Activated CD4-positive, alpha-beta T cell treated with anti-CD3 and anti-CD28 coated beads, Interleukin-2, amount 10 ng/mL, durations not matched to agents 24 days and 14 days (primary cell): ENCODE measurements at regions of chr18 and their contacts with region 1.

Region 1: DNA sequence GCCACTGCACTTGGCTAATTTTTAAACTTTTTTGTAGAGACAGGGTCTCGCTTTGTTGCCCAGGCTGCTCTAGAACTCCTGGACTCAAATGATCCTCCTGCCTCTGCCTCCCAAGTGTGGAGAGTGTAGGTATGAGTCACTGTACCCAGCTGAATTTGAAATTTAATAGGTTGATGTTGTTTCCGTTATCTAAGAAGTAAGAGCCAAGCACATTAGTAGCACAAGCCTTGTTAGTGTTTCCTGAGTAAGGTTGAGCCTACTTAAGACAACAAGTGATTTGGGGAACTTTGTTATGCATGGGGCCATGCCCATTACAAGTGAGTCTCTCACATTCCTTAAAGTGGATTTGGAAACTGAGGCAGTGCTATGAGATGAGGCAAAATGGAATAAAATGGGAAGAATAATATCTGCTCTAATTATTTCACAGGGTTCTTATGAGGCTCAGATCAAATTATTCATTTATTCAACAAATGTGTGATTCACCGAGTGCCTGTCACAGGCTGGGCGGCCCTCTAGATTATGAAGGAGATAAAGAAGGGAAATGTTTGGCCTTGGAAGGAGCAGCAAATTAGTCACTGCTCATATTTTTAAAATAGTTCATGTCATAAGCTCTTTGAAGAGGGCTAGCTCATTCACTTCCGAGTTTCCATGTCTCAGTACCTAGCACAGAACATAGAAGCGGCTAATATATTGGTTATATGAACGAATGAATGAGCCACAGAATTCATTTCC is 217.2 kb downstream of the LDLRAD4 start:
- DNase-seq: no peak
- H3K4me3 Mint-ChIP-seq: no peak overlapping the region
- H3K27ac Mint-ChIP-seq: peak overlapping the region; percentile 4
- H3K4me1 Mint-ChIP-seq: peaks cover 58% of the 10 kb centered on the region
- H3K27me3 Mint-ChIP-seq: no peaks in the 10 kb centered on the region

Region 2: GRCh38 chr18:12838178-12838634 is 597.6 kb before region 1 on chr18:
- intact Hi-C with region 1: loop called (anchors 1 kb)
- DNase-seq: peak; percentile 74
- H3K4me3 Mint-ChIP-seq: peak overlapping the region; percentile 84
- H3K27ac Mint-ChIP-seq: peak overlapping the region; percentile 89
- H3K4me1 Mint-ChIP-seq: peaks cover 51% of the 10 kb centered on the region
- H3K27me3 Mint-ChIP-seq: no peaks in the 10 kb centered on the region

Region 3: GRCh38 chr18:12891561-12891960 is 544.2 kb before region 1 on chr18:
- intact Hi-C with region 1: no loop called
- DNase-seq: no peak
- H3K4me3 Mint-ChIP-seq: no peak overlapping the region
- H3K27ac Mint-ChIP-seq: no peak overlapping the region
- H3K4me1 Mint-ChIP-seq: peaks cover 15% of the 10 kb centered on the region
- H3K27me3 Mint-ChIP-seq: peaks cover 11% of the 10 kb centered on the region

Region 4: GRCh38 chr18:13359210-13359609 is 76.6 kb before region 1 on chr18:
- intact Hi-C with region 1: no loop called
- DNase-seq: no peak
- H3K4me3 Mint-ChIP-seq: no peak overlapping the region
- H3K27ac Mint-ChIP-seq: no peak overlapping the region
- H3K4me1 Mint-ChIP-seq: peaks cover 5% of the 10 kb centered on the region
- H3K27me3 Mint-ChIP-seq: no peaks in the 10 kb centered on the region

Region 5: DNA sequence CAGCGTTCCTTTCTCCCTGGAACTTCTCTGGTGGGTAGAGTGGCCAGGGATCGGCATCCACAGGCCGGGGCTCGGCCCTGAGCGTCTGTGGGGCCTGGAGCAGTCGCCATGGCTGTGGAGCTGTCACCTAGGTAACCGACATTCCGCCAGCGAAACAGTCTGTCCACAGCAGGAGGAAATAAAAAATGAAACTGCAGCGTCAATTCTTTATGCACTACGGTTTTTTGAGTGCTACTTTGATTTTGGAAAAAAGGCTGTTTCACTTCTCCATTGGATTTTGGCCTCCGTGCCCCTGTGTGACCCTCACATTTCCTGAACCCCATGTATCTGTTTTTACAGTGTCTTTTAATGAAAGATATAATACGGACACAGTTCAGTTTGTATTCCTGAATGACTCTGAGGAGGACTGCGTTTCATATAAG is 53.8 kb before region 1 on chr18:
- intact Hi-C with region 1: loop called (anchors 1 kb)
- DNase-seq: peak; percentile 87
- H3K4me3 Mint-ChIP-seq: peak overlapping the region; percentile 72
- H3K27ac Mint-ChIP-seq: peak overlapping the region; percentile 96
- H3K4me1 Mint-ChIP-seq: peaks cover 52% of the 10 kb centered on the region
- H3K27me3 Mint-ChIP-seq: no peaks in the 10 kb centered on the region

Region 6: DNA sequence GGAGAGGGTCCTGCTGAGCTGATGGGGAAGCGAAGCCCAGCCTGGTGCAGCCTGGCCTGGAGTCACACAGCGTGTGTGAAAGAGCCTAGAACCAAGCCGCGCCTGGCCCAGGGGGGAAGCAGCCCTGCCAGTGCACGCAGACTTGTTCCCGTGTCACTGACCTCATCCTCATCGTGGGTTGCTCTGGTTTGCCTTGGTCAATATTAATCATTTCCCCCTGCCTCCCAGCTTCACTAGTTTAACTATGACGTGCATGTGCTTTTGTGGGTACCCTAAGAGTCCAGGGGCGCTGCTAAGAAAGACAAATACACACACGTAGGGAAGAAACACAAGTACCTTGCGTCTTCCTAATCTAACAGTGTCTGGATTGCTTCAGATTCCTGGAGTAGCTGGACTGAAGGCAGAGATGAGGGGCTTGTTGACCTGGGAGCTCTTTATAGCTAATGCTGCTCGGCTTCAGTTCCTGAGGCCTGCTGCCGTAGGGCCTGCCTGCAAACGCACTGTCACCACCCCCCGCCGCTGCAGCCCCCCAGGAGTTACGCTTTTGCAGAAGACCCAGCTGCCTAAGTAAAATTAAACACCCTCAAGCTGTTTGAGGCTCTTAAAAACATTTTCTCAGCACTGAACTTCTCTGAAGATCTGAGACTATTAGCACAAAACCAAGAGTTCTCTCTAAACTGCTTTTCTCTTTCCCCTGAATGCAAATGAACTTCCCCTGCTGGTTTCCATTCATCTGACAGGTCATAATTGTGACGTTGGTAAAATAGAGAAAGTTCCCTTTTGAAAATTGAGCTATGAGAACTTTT is 131.4 kb after region 1 on chr18:
- intact Hi-C with region 1: loop called (anchors 2 kb)
- DNase-seq: peak; percentile 65
- H3K4me3 Mint-ChIP-seq: peak overlapping the region; percentile 69
- H3K27ac Mint-ChIP-seq: peak overlapping the region; percentile 89
- H3K4me1 Mint-ChIP-seq: peaks cover 64% of the 10 kb centered on the region
- H3K27me3 Mint-ChIP-seq: no peaks in the 10 kb centered on the region

Region 7: DNA sequence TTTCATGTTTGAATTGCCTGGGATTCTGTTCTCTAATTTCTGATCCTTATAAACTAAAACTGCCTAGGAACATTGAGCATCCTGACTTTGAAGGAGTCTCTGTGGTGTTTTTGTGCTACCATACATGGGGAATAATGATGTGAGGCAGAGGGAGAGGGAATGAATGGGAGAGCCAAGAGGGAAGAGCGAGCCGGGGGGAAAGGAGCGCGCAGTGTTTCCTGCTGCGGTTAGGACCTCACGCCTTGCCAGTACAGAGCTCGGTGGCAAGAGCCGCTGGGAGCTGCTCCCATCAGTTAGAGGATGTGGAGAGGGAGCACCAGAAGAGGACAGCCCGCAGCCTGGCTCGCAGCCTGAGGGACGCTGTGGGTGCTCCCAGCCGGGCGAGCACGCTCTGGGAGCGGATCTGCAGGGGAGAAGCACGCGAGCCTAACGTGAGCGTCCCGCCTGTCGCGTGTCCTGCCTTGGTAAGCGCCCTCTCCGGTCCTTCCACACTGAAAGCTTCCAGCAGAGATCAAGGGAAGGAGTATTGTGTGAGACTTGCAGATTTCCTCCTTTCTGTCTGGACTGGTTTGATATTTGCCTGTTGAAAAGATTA is 175.9 kb after region 1 on chr18:
- intact Hi-C with region 1: loop called (anchors 5 kb)
- DNase-seq: no peak
- H3K4me3 Mint-ChIP-seq: peak overlapping the region; percentile 94
- H3K27ac Mint-ChIP-seq: peak overlapping the region; percentile 97
- H3K4me1 Mint-ChIP-seq: peaks cover 72% of the 10 kb centered on the region
- H3K27me3 Mint-ChIP-seq: no peaks in the 10 kb centered on the region